Aorta (tissue), 5 donors: ENCODE measurements at regions of chr18 and their contacts with region 1.

Region 1: GRCh38 chr18:56168049-56168781 is 470.2 kb downstream of the TXNL1 start:
- DNase-seq: peak in 1 of 2 donors; percentile 46
- ATAC-seq: peak; percentile 35
- H3K4me3 ChIP-seq: no peak overlapping the region
- H3K27ac ChIP-seq: no peak overlapping the region
- H3K4me1 ChIP-seq: no peaks in the 10 kb centered on the region
- H3K27me3 ChIP-seq: no peaks in the 10 kb centered on the region

Region 2: GRCh38 chr18:56224690-56225561 is 56.7 kb after region 1 on chr18:
- intact Hi-C with region 1: no loop called
- DNase-seq: no peak
- ATAC-seq: no peak
- H3K4me3 ChIP-seq: no peak overlapping the region
- H3K27ac ChIP-seq: no peak overlapping the region
- H3K4me1 ChIP-seq: no peaks in the 10 kb centered on the region
- H3K27me3 ChIP-seq: no peaks in the 10 kb centered on the region

Region 3: GRCh38 chr18:56329536-56329935 is 161.3 kb after region 1 on chr18:
- intact Hi-C with region 1: loop called in 1 of 2 experiments (anchors 2 kb)
- DNase-seq: no peak
- ATAC-seq: no peak
- H3K4me3 ChIP-seq: no peak overlapping the region
- H3K27ac ChIP-seq: peak overlapping the region in 1 of 2 donors; percentile 41
- H3K4me1 ChIP-seq: peaks cover 4 to 7% of the 10 kb centered on the region in 2 donors
- H3K27me3 ChIP-seq: no peaks in the 10 kb centered on the region

Region 4: GRCh38 chr18:56374007-56374655 is 205.9 kb after region 1 on chr18:
- intact Hi-C with region 1: no loop called
- DNase-seq: no peak
- ATAC-seq: no peak
- H3K4me3 ChIP-seq: no peak overlapping the region
- H3K27ac ChIP-seq: no peak overlapping the region
- H3K4me1 ChIP-seq: no peaks in the 10 kb centered on the region
- H3K27me3 ChIP-seq: no peaks in the 10 kb centered on the region